ENCODE measurements at regions of chr12 and their contacts with region 1.

Region 1: DNA sequence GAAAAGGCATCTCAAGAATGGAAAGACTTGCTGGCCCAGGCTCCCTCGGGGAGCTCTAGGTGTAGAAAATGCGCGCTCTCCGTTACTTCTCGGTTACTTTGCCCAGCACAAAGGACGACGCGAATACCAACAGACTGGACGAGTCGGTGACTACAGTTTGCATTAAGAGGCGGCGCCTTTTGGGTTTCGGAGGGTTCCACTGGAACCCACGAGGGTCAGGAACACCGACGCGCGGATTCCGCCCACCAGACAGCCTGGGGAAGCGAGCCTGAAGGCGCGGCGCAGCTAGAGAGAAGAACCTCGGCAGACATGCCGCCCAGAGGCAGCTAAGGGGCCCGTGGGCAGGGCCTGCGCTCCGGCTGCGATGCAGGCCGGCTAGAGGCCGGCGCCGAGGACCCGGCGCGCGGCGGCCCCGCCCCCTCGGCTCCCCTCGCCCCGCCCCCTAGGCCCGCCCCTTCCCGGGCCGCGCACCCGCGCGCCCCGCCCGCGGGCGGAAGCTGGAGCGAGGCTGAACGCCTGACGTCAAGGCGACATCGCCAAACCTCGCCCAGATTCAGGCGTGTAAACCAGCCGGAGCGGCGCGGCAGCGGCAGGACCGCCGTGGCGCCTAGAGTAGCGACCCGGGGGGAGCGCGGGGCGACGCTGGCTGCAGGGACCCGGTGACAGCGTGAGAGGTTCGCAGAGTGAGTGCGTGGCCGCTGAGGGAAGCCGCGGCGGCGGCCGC is at the start of gene RAP1B:
- DNase-seq: no peak
- ATAC-seq: peak; percentile 88
- H3K4me3 ChIP-seq: peak within 1 kb of the TSS; percentile 77 to 97
- H3K27ac ChIP-seq: peak within 1 kb of the TSS; percentile 100
- H3K4me1 ChIP-seq: peaks cover 36% of the 10 kb centered on the region
- H3K27me3 ChIP-seq: no peaks in the 10 kb centered on the region
- CTCF ChIP-seq: no peak
- total RNA-seq, gene RAP1B: 328 TPM

Region 2: DNA sequence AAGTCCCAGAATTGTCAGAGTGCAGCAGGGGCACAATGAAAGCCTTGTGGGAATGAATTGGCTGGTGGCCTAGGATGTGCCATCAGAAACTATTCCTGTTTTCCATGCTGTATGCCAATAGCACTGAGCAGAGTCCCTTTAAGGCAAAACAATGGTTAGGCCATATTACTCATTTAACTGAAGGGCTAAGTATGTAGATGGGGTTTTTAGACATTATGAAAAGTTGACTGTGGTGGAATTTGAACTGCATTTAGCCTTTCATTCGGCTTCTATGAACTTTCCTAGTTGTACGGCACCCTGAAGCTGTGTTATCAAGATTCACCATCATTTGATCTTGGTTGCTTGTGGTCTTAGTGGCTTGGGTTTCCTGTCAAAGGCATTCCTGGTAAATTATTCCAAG is 409.7 kb before region 1 on chr12:
- CTCF ChIA-PET with region 1: no interaction called
- POLR2A ChIA-PET with region 1: no interaction called
- in situ Hi-C with region 1: no loop called
- intact Hi-C with region 1: no loop called
- DNase-seq: no peak
- ATAC-seq: no peak
- H3K4me3 ChIP-seq: no peak overlapping the region
- H3K27ac ChIP-seq: no peak overlapping the region
- H3K4me1 ChIP-seq: no peaks in the 10 kb centered on the region; the same call in 1 of the 2 replicates
- H3K27me3 ChIP-seq: no peaks in the 10 kb centered on the region
- CTCF ChIP-seq: no peak

Region 3: DNA sequence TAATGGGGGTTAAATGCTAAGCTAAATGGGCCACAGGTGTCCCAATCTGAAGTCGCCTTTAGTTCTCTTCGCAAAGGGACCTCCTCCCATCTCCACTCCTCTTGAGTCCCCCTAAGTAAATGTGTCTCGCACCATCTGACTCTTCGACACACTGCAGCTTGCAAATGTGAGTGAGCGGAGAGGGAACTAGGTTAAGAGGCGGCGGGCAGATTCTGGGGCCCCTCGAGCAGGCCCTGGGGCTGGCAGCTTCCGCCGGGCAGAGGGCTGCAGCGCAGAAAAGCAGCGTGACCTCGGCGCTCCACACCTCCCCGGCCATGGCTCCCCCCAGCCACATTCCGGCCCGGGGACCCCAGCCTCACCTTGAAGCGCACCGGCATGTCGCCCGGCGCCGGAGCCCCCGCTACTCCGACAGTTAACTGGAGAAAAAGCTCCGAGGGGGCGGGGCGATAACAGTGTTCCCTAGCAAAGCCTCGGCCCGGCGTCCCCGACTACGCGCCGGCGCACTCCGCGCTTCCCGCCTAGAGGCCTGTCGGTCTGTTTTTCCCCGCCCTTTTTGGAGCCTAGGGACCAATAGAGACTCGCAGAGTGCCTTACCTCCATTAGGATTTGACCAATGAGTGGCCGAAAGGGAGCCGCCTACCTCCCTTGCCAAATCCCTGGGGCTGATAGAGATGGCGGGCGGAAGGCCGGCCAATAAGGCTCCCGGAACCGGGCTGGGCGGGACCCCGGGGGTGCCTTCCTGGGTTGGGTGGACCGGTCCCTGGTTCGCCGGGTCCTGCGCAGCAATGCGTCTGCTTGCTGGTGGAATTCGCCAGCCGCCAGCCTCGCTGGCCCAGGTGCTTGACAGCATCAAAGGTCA is 278.4 kb before region 1 on chr12 and contains the start of gene MDM1:
- CTCF ChIA-PET with region 1: interaction called, 3 read pairs
- POLR2A ChIA-PET with region 1: interaction called, 4 read pairs
- in situ Hi-C with region 1: no loop called
- intact Hi-C with region 1: loop called (anchors 5 kb)
- DNase-seq: peak; percentile 78
- ATAC-seq: peak; percentile 98
- H3K4me3 ChIP-seq: peak within 1 kb of the TSS; percentile 88 to 94
- H3K27ac ChIP-seq: peak within 1 kb of the TSS; percentile 97
- H3K4me1 ChIP-seq: peaks cover 71% of the 10 kb centered on the region
- H3K27me3 ChIP-seq: no peaks in the 10 kb centered on the region
- CTCF ChIP-seq: no peak
- total RNA-seq, gene MDM1: 17.8 TPM

Region 4: GRCh38 chr12:68358532-68359485 is 251.7 kb before region 1 on chr12:
- CTCF ChIA-PET with region 1: no interaction called
- POLR2A ChIA-PET with region 1: no interaction called
- in situ Hi-C with region 1: no loop called
- intact Hi-C with region 1: loop called (anchors 5 kb)
- DNase-seq: peak; percentile 35
- ATAC-seq: peak; percentile 82
- H3K4me3 ChIP-seq: no peak overlapping the region
- H3K27ac ChIP-seq: peak overlapping the region; percentile 98
- H3K4me1 ChIP-seq: peaks cover 32% of the 10 kb centered on the region
- H3K27me3 ChIP-seq: no peaks in the 10 kb centered on the region
- CTCF ChIP-seq: peak; percentile 78

Region 5: GRCh38 chr12:68521321-68521839 is 89.2 kb before region 1 on chr12:
- CTCF ChIA-PET with region 1: no interaction called
- POLR2A ChIA-PET with region 1: interaction called, 12 read pairs
- in situ Hi-C with region 1: no loop called
- intact Hi-C with region 1: no loop called
- DNase-seq: no peak
- ATAC-seq: peak; percentile 87
- H3K4me3 ChIP-seq: peak overlapping the region in 1 of 2 experiments; percentile 4; a peak in 2 of 4 replicates
- H3K27ac ChIP-seq: peak overlapping the region; percentile 97
- H3K4me1 ChIP-seq: peaks cover 34% of the 10 kb centered on the region
- H3K27me3 ChIP-seq: no peaks in the 10 kb centered on the region
- CTCF ChIP-seq: no peak

Region 6: DNA sequence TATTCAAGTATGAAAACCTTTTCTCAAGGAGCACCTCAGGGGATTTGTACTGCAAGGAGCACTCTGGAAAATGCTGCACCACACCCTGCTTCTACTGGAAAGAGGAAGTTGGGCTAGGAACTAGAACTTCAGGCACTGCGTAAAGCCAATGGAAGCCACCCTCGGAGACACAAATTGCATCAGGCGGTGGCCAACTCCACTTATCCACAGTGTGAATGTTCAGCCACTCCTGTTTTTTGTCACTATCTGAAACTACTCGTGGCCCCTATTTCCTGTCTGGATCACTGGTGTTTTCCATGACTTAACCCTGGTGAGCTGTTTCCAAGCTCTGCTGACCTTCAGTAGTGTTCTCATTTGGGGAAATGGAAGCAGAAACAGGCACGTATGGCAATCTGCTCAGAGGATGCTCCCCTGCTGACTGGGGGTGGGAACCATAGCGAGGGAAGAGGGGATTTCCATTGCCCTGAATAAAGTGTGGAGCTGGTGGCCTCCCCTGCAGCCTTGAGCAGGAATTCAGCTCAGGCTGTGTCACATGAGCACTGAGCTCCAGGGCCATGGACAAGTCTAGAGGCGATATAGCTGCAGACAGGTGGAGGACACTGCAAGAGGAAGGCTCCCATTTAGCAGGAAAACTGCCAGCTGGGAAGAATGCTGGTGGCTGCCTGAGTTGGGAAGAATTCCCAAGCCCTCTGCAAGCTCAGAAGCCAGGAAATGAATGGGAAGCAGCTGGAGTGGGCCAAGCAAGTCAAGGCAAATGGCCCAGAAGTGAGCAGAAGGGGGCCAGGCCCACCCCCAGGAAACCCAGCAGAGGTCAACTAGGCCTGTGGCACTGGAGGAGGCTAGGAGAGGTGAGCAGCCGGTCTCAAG is 50.3 kb before region 1 on chr12:
- CTCF ChIA-PET with region 1: no interaction called
- POLR2A ChIA-PET with region 1: interaction called, 16 read pairs
- in situ Hi-C with region 1: no loop called
- intact Hi-C with region 1: loop called (anchors 5 kb)
- DNase-seq: no peak
- ATAC-seq: peak; percentile 4; the same call in 1 of the 2 replicates
- H3K4me3 ChIP-seq: no peak overlapping the region
- H3K27ac ChIP-seq: peak overlapping the region; percentile 95
- H3K4me1 ChIP-seq: peaks cover 77% of the 10 kb centered on the region
- H3K27me3 ChIP-seq: no peaks in the 10 kb centered on the region
- CTCF ChIP-seq: no peak

Region 7: GRCh38 chr12:68587448-68587873 is 23.1 kb before region 1 on chr12:
- CTCF ChIA-PET with region 1: no interaction called
- POLR2A ChIA-PET with region 1: interaction called, 11 read pairs
- in situ Hi-C with region 1: no loop called
- intact Hi-C with region 1: no loop called
- DNase-seq: no peak
- ATAC-seq: peak; percentile 54; the same call in 1 of the 2 replicates
- H3K4me3 ChIP-seq: no peak overlapping the region
- H3K27ac ChIP-seq: peak overlapping the region; percentile 57; the same call in 1 of the 2 replicates
- H3K4me1 ChIP-seq: peaks cover 11% of the 10 kb centered on the region
- H3K27me3 ChIP-seq: no peaks in the 10 kb centered on the region
- CTCF ChIP-seq: no peak

Measured in Panc1 (cell line).